Sigmoid colon (tissue), 7 donors: ENCODE measurements at regions of chr15 and their contacts with region 1.

Region 1: GRCh38 chr15:79065706-79066376 is 24.7 kb downstream of the RASGRF1 start:
- DNase-seq: peak; percentile 49
- H3K4me3 ChIP-seq: no peak overlapping the region
- H3K27ac ChIP-seq: peak overlapping the region in 3 of 4 donors; percentile 86 to 88 (median 86)
- H3K4me1 ChIP-seq: peaks cover 0 to 41% (median 27%) of the 10 kb centered on the region in 4 donors
- H3K27me3 ChIP-seq: no peaks in the 10 kb centered on the region
- CTCF ChIP-seq: no peak
- EP300 ChIP-seq: no peak
- POLR2A ChIP-seq: no peak

Region 2: GRCh38 chr15:78915341-78916087 is 150.3 kb before region 1 on chr15:
- intact Hi-C with region 1: loop called (anchors 5 kb)
- DNase-seq: peak; percentile 82
- H3K4me3 ChIP-seq: no peak overlapping the region
- H3K27ac ChIP-seq: peak overlapping the region; percentile 38 to 87 (median 78)
- H3K4me1 ChIP-seq: peaks cover 0 to 68% (median 55%) of the 10 kb centered on the region in 4 donors
- H3K27me3 ChIP-seq: no peaks in the 10 kb centered on the region
- CTCF ChIP-seq: no peak
- EP300 ChIP-seq: no peak
- POLR2A ChIP-seq: no peak

Region 3: GRCh38 chr15:79028411-79028964 is 37.4 kb before region 1 on chr15:
- intact Hi-C with region 1: no loop called
- DNase-seq: no peak
- H3K4me3 ChIP-seq: no peak overlapping the region
- H3K27ac ChIP-seq: no peak overlapping the region
- H3K4me1 ChIP-seq: no peaks in the 10 kb centered on the region
- H3K27me3 ChIP-seq: peaks cover 0 to 6% (median 0%) of the 10 kb centered on the region in 3 donors
- CTCF ChIP-seq: peak; percentile 82 to 93 (median 88)
- EP300 ChIP-seq: no peak
- POLR2A ChIP-seq: no peak